ENCODE measurements at regions of chr17 and their contacts with region 1.

Region 1: GRCh38 chr17:63537991-63538692 is 12.1 kb upstream of the DCAF7 start:
- DNase-seq: no peak
- H3K4me3 ChIP-seq: no peak overlapping the region
- H3K27ac ChIP-seq: no peak overlapping the region
- H3K4me1 ChIP-seq: peaks cover 7% of the 10 kb centered on the region
- H3K27me3 ChIP-seq: peaks cover 24% of the 10 kb centered on the region
- CTCF ChIP-seq: no peak

Region 2: DNA sequence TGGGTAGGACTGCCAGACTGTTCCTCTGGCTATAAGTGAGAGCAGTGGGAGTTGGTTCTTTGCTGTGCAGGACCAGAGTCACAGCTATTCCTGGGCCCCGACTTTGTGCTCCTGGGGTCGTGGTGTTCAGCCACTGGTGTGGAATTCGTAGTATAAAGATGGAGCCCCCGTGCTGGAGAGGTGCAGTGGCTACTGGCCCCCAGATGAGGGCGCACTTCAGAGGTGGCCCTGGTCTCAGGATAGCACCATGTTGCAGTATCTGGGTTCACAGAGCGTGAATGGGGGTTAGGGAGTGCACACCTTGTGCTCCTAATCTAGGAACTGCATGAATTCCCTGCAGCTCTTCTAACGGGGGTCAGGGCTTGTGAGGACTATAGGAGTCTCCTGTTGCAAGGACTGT is 551.0 kb before region 1 on chr17:
- CTCF ChIA-PET with region 1: no interaction called
- POLR2A ChIA-PET with region 1: no interaction called
- intact Hi-C with region 1: no loop called
- DNase-seq: no peak
- H3K4me3 ChIP-seq: no peak overlapping the region
- H3K27ac ChIP-seq: no peak overlapping the region
- H3K4me1 ChIP-seq: no peaks in the 10 kb centered on the region
- H3K27me3 ChIP-seq: no peaks in the 10 kb centered on the region
- CTCF ChIP-seq: peak; percentile 54

Region 3: DNA sequence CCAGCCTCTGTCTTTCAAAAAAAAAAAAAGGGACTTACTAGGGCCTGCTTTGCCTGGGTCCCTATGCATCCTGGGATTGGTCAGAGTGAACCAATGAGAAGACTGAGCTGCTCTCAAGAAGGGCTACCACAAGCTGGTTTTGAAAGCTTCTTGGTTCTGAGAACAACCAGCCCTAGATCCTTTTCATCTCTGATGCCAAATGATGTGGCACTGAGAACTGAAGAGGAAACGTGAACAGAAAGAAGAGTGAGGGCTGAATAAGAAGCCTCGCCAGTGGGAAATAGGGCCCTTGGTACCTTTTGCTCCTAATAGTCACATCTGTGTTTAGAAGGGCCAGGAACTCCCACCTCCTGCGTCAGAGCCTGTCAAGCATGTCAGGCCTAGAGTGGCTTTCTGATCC is 73.2 kb after region 1 on chr17:
- CTCF ChIA-PET with region 1: no interaction called
- POLR2A ChIA-PET with region 1: interaction called, 11 read pairs
- intact Hi-C with region 1: no loop called
- DNase-seq: no peak
- H3K4me3 ChIP-seq: no peak overlapping the region
- H3K27ac ChIP-seq: no peak overlapping the region
- H3K4me1 ChIP-seq: no peaks in the 10 kb centered on the region
- H3K27me3 ChIP-seq: no peaks in the 10 kb centered on the region
- CTCF ChIP-seq: no peak

Measured in A673 (cell line).